ENCODE measurements at regions of chr17 and their contacts with region 1.

Region 1: GRCh38 chr17:56715613-56716357 is 117.9 kb downstream of the C17orf67 start:
- DNase-seq: peak; percentile 87
- ATAC-seq: peak; percentile 92
- H3K4me3 Mint-ChIP-seq: no peak overlapping the region
- H3K27ac Mint-ChIP-seq: no peak overlapping the region
- H3K4me1 Mint-ChIP-seq: peaks cover 28% of the 10 kb centered on the region
- H3K27me3 Mint-ChIP-seq: no peaks in the 10 kb centered on the region
- CTCF ChIP-seq: peak; percentile 88

Region 2: GRCh38 chr17:56499799-56500388 is 215.9 kb before region 1 on chr17:
- CTCF ChIA-PET with region 1: interaction called, 52 read pairs
- POLR2A ChIA-PET with region 1: no interaction called
- DNase-seq: no peak
- ATAC-seq: no peak
- H3K4me3 Mint-ChIP-seq: no peak overlapping the region
- H3K27ac Mint-ChIP-seq: no peak overlapping the region
- H3K4me1 Mint-ChIP-seq: no peaks in the 10 kb centered on the region
- H3K27me3 Mint-ChIP-seq: no peaks in the 10 kb centered on the region
- CTCF ChIP-seq: peak; percentile 39

Region 3: DNA sequence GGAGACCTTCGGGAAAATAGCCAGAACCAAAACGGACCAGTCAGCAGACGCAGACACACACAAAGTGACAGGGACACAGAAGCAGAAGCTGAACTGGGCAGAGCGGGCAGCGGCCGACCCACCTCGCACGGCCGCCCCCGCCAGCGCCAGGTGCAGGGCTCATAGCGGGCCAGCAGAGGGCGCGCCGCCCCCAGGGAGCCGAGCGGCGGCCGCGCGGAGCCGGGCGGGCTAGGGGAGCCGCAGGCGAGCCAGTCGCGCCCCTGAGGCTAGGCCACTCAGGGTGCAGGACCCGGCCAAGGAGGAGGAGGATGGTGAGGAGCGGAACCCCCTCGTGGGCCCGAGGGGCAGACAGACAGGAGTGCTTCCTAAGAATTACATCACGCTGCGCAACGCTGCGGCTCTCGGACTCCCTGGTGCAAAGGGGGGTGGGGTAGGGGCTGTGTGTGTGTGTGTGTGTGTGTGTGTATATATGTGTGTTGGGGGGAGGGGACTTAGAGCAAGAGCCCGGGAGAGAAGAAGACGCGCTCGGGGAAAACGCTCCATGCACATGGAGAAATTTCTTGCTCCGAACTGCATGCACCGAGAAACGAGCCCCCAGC is 123.2 kb before region 1 on chr17:
- CTCF ChIA-PET with region 1: interaction called, 57 read pairs
- POLR2A ChIA-PET with region 1: interaction called, 4 read pairs
- DNase-seq: peak; percentile 77
- ATAC-seq: peak; percentile 49
- H3K4me3 Mint-ChIP-seq: peak overlapping the region; percentile 73
- H3K27ac Mint-ChIP-seq: no peak overlapping the region
- H3K4me1 Mint-ChIP-seq: peaks cover 15% of the 10 kb centered on the region
- H3K27me3 Mint-ChIP-seq: peaks cover 58% of the 10 kb centered on the region
- CTCF ChIP-seq: peak; percentile 96

Region 4: DNA sequence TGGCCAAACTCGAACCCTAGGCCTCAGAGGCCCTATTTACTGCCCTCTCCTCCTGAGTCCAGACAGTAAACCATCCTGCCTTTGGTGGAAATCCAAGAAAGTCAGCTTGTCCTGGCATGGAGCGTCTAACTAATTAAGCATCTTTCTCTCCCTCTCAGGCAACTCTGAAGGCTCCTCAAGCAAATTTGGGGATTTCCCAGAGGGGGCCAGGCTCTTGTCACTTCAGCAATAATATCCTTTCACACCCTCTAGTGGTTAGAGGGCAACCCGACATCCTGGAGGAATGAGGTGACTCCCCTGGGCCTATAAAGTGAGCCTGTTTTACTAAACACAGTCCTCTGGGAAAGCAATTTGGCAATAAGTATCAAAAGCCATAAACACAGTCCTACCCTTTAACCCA is 61.9 kb before region 1 on chr17:
- CTCF ChIA-PET with region 1: interaction called, 10 read pairs
- POLR2A ChIA-PET with region 1: no interaction called
- DNase-seq: peak; percentile 63
- ATAC-seq: peak; percentile 99
- H3K4me3 Mint-ChIP-seq: no peak overlapping the region
- H3K27ac Mint-ChIP-seq: no peak overlapping the region
- H3K4me1 Mint-ChIP-seq: peaks cover 8% of the 10 kb centered on the region
- H3K27me3 Mint-ChIP-seq: peaks cover 4% of the 10 kb centered on the region
- CTCF ChIP-seq: peak; percentile 43; the same call in 1 of the 2 replicates

Region 5: DNA sequence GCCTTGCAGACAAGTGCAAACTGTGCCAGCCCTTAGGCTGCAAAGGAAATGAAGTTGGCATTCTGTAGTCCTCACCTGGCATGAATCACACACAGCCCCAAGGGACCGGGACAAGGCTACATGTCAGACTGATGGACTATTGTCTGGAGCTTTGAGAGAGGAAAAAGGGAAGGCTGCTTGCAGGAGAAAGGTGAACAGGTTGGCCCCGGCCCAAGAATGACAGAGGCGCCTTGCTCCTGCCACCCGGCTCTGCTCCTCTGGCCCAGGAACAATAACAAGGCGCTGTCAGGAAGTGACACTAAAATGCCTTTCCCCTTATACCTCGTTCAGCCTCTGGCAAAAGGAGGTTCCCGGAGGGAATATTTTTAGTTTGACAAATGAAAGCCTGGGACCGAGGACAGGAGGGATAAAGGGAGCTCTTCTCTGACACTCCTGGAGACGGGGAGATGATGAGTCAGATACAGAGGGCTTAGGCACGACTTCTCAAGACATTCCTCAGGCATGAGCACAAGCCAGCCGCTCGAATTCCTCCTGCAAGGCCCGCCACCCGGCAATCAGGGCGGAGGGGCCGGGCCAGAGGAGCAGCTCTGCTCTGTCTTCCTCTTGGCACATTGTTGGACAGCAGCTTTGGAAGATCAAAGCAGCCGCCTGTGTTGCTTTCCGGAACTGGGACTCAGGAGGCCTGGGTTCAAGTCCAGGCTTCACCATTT is 16.4 kb before region 1 on chr17:
- CTCF ChIA-PET with region 1: interaction called, 15 read pairs
- POLR2A ChIA-PET with region 1: no interaction called
- DNase-seq: peak; percentile 51
- ATAC-seq: peak; percentile 92
- H3K4me3 Mint-ChIP-seq: no peak overlapping the region
- H3K27ac Mint-ChIP-seq: no peak overlapping the region
- H3K4me1 Mint-ChIP-seq: peaks cover 16% of the 10 kb centered on the region
- H3K27me3 Mint-ChIP-seq: no peaks in the 10 kb centered on the region
- CTCF ChIP-seq: no peak

Region 6: GRCh38 chr17:56779898-56780733 is 64.3 kb after region 1 on chr17:
- CTCF ChIA-PET with region 1: interaction called, 29 read pairs
- POLR2A ChIA-PET with region 1: no interaction called
- DNase-seq: peak; percentile 81
- ATAC-seq: peak; percentile 97
- H3K4me3 Mint-ChIP-seq: peak overlapping the region; percentile 56
- H3K27ac Mint-ChIP-seq: no peak overlapping the region
- H3K4me1 Mint-ChIP-seq: peaks cover 12% of the 10 kb centered on the region
- H3K27me3 Mint-ChIP-seq: peaks cover 48% of the 10 kb centered on the region
- CTCF ChIP-seq: peak; percentile 97

Measured in WTC11 (cell line).